Activated T-helper 2 cell treated with anti-CD3 and anti-CD28 coated beads, Interferon-gamma antibody, Interleukin-2, Interleukin-4, amounts not matched to agents 10 μg/mL and 5 μg/mL and 100 μg/mL, durations not matched to agents 14 hours and 24 hours and 36 hours (primary cell): ENCODE measurements at regions of chr7 and their contacts with region 1.

Region 1: DNA sequence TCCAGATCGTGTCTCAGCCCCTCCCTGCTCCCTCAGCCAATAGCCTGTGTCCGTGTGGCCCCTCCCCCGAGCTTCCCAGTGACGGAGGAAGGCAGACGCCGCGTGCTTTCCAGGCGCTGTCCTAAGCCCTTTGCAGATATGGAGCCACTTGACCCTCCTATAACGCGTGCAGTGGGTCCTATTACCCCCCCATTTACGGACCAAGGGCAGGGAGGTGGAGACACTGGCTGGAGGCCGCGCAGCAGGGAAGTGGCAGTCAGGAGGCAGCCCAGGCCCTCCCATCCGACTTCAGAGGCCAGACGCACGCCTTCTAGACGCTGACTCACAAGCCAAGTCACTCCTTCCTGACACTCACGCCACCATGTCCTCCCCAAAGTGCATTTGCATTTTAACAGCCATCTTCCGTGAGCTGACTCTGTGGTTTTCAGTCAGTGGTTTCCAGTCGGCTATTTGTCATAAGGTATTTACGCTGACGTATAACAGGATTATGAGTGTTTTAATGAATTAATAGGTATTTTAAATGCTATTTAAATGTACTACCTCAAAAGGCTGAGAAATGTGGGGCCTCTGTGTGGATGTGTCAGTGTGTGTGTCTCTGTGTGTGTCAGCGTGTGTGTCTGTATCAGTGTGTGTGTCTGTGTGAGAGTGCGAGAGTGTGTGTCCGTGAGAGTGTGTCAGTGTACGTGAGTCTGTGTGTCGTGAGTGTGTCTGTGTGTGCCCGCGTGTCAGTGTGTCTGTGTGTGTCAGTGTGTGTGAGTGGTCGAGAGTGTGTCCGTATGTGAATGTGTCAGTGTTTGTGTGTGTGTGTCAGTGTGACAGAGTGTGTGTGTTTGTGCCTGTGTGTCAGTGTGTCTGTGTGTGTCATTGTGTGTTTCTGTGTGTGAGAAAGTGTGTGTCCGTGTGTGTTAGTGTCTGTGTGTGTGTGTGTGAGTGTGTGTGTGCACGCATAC is 92.0 kb upstream of the INSIG1 start:
- DNase-seq: peak; percentile 92
- H3K4me3 Mint-ChIP-seq: peak overlapping the region; percentile 86
- H3K27ac Mint-ChIP-seq: peak overlapping the region; percentile 99
- H3K4me1 Mint-ChIP-seq: peaks cover 29% of the 10 kb centered on the region
- H3K27me3 Mint-ChIP-seq: no peaks in the 10 kb centered on the region

Region 2: GRCh38 chr7:155003376-155004214 is 202.0 kb before region 1 on chr7:
- intact Hi-C with region 1: loop called (anchors 5 kb)
- DNase-seq: peak; percentile 77
- H3K4me3 Mint-ChIP-seq: peak overlapping the region; percentile 93
- H3K27ac Mint-ChIP-seq: peak overlapping the region; percentile 92
- H3K4me1 Mint-ChIP-seq: peaks cover 13% of the 10 kb centered on the region
- H3K27me3 Mint-ChIP-seq: no peaks in the 10 kb centered on the region

Region 3: GRCh38 chr7:155216293-155217272 is 10.9 kb after region 1 on chr7:
- intact Hi-C with region 1: loop called (anchors 1 kb)
- DNase-seq: no peak
- H3K4me3 Mint-ChIP-seq: no peak overlapping the region
- H3K27ac Mint-ChIP-seq: no peak overlapping the region
- H3K4me1 Mint-ChIP-seq: peaks cover 15% of the 10 kb centered on the region
- H3K27me3 Mint-ChIP-seq: no peaks in the 10 kb centered on the region

Region 4: GRCh38 chr7:155283565-155284194 is 78.0 kb after region 1 on chr7:
- intact Hi-C with region 1: loop called (anchors 1 kb)
- DNase-seq: no peak
- H3K4me3 Mint-ChIP-seq: no peak overlapping the region
- H3K27ac Mint-ChIP-seq: peak overlapping the region; percentile 51
- H3K4me1 Mint-ChIP-seq: peaks cover 86% of the 10 kb centered on the region
- H3K27me3 Mint-ChIP-seq: no peaks in the 10 kb centered on the region

Region 5: GRCh38 chr7:155344600-155345433 is 139.2 kb after region 1 on chr7:
- intact Hi-C with region 1: loop called (anchors 1 kb)
- DNase-seq: peak; percentile 75
- H3K4me3 Mint-ChIP-seq: peak overlapping the region; percentile 68
- H3K27ac Mint-ChIP-seq: no peak overlapping the region
- H3K4me1 Mint-ChIP-seq: peaks cover 12% of the 10 kb centered on the region
- H3K27me3 Mint-ChIP-seq: peaks cover 19% of the 10 kb centered on the region

Region 6: GRCh38 chr7:155746188-155746587 is 540.5 kb after region 1 on chr7:
- intact Hi-C with region 1: loop called (anchors 5 kb)
- DNase-seq: no peak
- H3K4me3 Mint-ChIP-seq: peak overlapping the region; percentile 45
- H3K27ac Mint-ChIP-seq: peak overlapping the region; percentile 82
- H3K4me1 Mint-ChIP-seq: peaks cover 61% of the 10 kb centered on the region
- H3K27me3 Mint-ChIP-seq: no peaks in the 10 kb centered on the region

Region 7: DNA sequence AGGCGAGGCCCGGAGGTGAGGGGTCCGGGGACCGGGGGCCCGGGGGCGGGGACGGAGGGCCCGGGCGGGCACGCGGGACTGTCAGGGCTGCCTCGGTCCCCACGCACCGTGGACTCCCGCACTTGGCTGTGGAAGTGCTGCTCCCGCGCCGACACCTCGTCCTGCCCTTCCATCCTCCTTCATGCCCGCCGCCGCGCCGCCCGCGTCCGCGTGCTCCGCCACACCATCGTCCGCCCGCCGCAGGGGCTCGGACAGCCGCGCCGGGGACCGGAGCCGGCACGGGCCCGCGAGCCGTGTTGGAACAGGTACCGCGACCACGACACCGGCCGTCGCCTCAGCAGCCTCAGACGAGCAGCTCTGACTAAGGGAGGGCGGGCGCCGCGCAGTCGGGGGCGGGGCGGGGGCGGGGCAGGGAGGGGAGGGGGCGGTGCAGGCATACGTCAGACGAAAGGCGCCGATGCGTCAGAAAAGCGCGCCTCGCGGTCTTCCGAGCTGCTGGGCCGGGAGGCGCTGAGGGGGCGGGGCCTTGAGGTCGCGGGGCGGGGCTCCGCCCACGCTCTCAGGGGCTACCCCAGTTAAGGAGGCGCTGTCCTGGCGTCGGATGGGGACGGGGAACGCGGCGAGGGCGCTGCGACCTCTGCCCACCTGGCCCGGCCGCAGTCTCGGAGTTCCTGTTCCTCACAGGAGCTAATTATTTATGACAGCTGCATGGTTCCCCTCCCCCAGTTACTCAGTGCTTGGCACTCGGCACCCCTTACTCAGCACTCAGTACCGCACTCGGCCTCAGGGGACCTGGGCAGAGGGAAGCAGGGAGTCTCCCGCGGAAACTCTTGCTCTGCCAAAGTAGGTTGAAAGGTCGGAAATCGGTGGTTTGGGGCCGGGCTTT is 1687.4 kb after region 1 on chr7 and contains the start of gene LMBR1:
- intact Hi-C with region 1: loop called (anchors 10 kb)
- DNase-seq: peak; percentile 91
- H3K4me3 Mint-ChIP-seq: peak within 1 kb of the TSS; percentile 94
- H3K27ac Mint-ChIP-seq: peak within 1 kb of the TSS; percentile 93
- H3K4me1 Mint-ChIP-seq: peaks cover 46% of the 10 kb centered on the region
- H3K27me3 Mint-ChIP-seq: no peaks in the 10 kb centered on the region
- total RNA-seq, gene LMBR1: 60.5 and 61.7 TPM in 2 replicates